ENCODE measurements at regions of chr6 and their contacts with region 1.

Region 1: DNA sequence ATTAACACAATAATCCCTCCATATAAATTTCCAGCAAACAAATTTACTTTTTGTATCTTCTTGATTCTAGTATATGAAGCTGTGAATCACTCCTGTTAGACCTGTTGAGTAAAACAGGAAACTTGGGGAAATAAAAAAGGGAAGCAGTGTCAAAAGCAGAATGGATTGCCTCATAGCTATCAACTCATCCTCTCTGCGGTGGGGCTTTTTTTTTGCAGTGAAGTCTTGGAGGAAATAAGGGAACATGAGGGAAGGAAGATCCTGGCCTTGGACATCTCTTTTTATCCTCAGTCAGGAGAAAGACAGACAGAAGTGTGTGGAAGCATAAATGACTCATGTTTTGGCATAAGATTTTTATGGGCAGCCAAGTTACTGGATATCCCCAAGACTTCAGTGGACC is 332.5 kb downstream of the TFAP2A start:
- DNase-seq: peak; percentile 71
- H3K4me3 ChIP-seq: no peak overlapping the region
- H3K27ac ChIP-seq: no peak overlapping the region
- H3K4me1 ChIP-seq: peaks cover 37% of the 10 kb centered on the region
- H3K27me3 ChIP-seq: no peaks in the 10 kb centered on the region
- CTCF ChIP-seq: no peak

Region 2: DNA sequence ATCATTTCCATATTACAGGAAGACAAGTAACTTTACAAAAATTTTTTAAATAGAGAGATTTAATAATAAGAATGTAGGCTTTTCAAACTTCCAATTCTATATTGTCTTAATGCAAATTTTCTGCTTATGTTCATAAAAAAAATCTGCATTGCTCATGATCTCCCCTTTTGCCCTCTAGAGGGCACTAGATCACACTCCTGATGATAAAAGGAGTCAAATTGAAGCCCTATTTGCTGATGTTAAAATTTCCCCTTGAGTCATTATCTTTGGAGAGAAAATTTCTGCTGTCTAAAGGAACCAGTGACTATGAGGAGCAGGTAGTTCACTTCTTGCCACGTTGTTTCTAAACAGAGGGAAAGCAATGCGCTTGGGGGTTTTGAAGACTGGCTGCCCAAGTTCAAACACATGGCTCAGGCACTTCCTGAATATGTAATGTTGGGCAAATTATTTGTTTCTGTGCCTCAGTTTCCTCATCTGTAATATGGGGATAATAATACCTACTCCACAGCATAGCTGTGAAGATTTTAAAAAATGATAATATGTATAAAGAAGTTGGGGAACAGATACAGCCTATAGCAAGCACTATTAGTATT is 541.8 kb before region 1 on chr6:
- CTCF ChIA-PET with region 1: no interaction called
- dilution Hi-C with region 1: no loop called
- in situ Hi-C with region 1: no loop called
- intact Hi-C with region 1: loop called (anchors 5 kb)
- DNase-seq: peak; percentile 72
- H3K4me3 ChIP-seq: no peak overlapping the region
- H3K27ac ChIP-seq: no peak overlapping the region
- H3K4me1 ChIP-seq: no peaks in the 10 kb centered on the region
- H3K27me3 ChIP-seq: no peaks in the 10 kb centered on the region
- CTCF ChIP-seq: peak; percentile 74 to 80

Region 3: GRCh38 chr6:9875615-9876353 is 206.6 kb before region 1 on chr6:
- CTCF ChIA-PET with region 1: no interaction called
- dilution Hi-C with region 1: no loop called
- in situ Hi-C with region 1: no loop called
- intact Hi-C with region 1: no loop called
- DNase-seq: no peak
- H3K4me3 ChIP-seq: no peak overlapping the region
- H3K27ac ChIP-seq: no peak overlapping the region
- H3K4me1 ChIP-seq: no peaks in the 10 kb centered on the region
- H3K27me3 ChIP-seq: peaks cover 2% of the 10 kb centered on the region
- CTCF ChIP-seq: no peak

Region 4: DNA sequence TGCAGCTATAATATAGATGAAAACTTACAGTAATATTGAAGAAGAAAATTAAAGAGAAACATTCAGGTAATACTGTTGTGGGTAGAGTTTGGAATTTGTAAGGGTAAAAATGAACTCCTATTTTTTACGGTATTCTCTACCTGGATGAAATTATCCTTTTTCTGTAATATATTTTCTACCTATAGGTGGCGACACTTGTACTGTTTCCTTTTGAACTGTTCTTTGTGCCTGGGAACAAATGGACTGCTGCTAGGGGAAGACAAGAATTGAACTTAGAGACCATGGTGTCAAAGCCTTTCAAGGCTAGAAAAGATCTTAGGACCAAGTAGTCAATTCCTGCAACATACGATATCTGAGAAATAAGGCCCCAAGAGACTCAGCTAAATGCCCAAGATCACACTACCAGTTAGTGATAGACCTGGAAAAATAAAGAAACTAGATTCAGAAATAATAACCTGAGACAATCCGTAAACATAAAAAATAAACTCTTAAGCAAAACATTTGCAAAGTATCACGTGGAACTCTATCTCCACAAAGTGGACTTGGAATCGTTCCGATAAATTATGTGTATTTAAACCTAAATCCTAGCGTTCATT is 51.3 kb before region 1 on chr6:
- CTCF ChIA-PET with region 1: interaction called, 13 read pairs
- dilution Hi-C with region 1: loop called (anchors 5 kb)
- in situ Hi-C with region 1: no loop called
- intact Hi-C with region 1: loop called (anchors 2 kb)
- DNase-seq: peak; percentile 16
- H3K4me3 ChIP-seq: no peak overlapping the region
- H3K27ac ChIP-seq: no peak overlapping the region
- H3K4me1 ChIP-seq: no peaks in the 10 kb centered on the region
- H3K27me3 ChIP-seq: no peaks in the 10 kb centered on the region
- CTCF ChIP-seq: peak; percentile 53 to 60

Region 5: GRCh38 chr6:10156875-10157274 is 74.5 kb after region 1 on chr6:
- CTCF ChIA-PET with region 1: no interaction called
- dilution Hi-C with region 1: no loop called
- in situ Hi-C with region 1: no loop called
- intact Hi-C with region 1: no loop called
- DNase-seq: no peak
- H3K4me3 ChIP-seq: no peak overlapping the region
- H3K27ac ChIP-seq: no peak overlapping the region
- H3K4me1 ChIP-seq: peaks cover 7% of the 10 kb centered on the region
- H3K27me3 ChIP-seq: no peaks in the 10 kb centered on the region
- CTCF ChIP-seq: no peak

Region 6: DNA sequence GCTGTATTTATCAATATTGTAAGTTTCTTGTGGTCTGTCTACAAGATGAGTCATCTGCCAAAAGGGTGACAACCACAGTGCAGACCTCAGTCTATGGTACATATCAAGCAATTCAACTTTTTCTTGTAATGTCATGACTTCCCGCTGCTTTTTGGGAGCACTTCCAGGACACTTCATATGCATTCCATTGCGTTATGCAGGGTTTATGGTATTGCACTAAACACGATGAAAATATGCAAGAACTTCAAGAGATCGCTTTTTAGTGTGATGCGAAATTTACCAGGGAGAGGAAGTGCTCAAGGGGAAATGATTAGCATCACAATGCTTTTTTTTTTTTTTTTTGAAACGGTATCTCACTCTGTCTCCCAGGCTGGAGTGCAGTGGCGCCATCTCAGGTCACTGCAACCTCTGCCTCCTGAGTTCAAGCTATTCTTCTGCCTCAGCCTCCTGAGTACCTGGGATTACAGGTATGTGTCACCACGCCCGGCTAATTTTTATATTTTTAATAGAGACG is 166.1 kb after region 1 on chr6:
- CTCF ChIA-PET with region 1: interaction called, 11 read pairs
- dilution Hi-C with region 1: no loop called
- in situ Hi-C with region 1: no loop called
- intact Hi-C with region 1: loop called (anchors 2 kb)
- DNase-seq: peak; percentile 53
- H3K4me3 ChIP-seq: no peak overlapping the region
- H3K27ac ChIP-seq: no peak overlapping the region
- H3K4me1 ChIP-seq: peaks cover 10% of the 10 kb centered on the region
- H3K27me3 ChIP-seq: no peaks in the 10 kb centered on the region
- CTCF ChIP-seq: peak; percentile 15 to 35

Region 7: GRCh38 chr6:10323018-10323760 is 240.8 kb after region 1 on chr6:
- CTCF ChIA-PET with region 1: interaction called, 13 read pairs
- dilution Hi-C with region 1: no loop called
- in situ Hi-C with region 1: no loop called
- intact Hi-C with region 1: no loop called
- DNase-seq: peak; percentile 48
- H3K4me3 ChIP-seq: no peak overlapping the region
- H3K27ac ChIP-seq: no peak overlapping the region
- H3K4me1 ChIP-seq: no peaks in the 10 kb centered on the region
- H3K27me3 ChIP-seq: no peaks in the 10 kb centered on the region
- CTCF ChIP-seq: no peak

Region 8: DNA sequence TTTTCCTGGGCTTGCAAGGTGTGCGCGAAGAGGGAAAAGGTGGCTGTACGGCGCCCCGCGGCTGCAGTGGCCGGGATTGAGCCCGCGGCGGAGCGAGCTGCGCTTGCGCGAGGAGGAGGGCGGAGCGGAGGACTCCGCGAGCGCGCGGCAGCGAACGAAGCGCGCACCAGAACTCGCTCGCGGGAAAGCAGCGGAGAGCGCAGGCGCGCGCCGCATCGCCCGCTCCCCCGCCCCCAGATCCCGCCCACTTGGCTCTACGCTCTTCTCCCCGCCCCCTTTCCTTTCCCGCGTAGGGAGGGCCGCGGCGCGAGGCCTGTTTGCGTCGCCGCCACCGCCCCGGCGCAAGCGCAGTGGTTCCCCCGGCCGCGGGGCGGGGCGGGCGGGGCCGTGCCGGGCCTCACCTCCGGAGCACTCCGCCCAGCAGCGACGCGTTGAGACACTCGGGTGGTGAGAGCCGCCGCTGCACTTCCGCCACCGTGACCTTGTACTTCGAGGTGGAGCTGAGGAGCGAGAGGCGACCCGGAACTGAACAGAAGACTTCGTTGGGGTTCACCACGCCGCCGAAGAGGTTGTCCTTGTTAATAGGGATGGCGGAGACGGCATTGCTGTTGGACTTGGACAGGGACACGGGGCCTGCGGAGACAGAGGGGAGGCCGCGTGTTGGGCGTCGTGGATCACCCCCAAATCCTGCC is 321.9 kb after region 1 on chr6:
- CTCF ChIA-PET with region 1: interaction called, 5 read pairs
- dilution Hi-C with region 1: no loop called
- in situ Hi-C with region 1: loop called in 1 of 2 experiments (anchors 10 kb)
- intact Hi-C with region 1: loop called (anchors 2 kb)
- DNase-seq: peak; percentile 97
- H3K4me3 ChIP-seq: peak overlapping the region; percentile 51 to 97 (median 74)
- H3K27ac ChIP-seq: peak overlapping the region; percentile 99
- H3K4me1 ChIP-seq: peaks cover 79% of the 10 kb centered on the region
- H3K27me3 ChIP-seq: no peaks in the 10 kb centered on the region
- CTCF ChIP-seq: peak; percentile 4 to 50